ENCODE measurements at regions of chr5 and their contacts with region 1.

Region 1: DNA sequence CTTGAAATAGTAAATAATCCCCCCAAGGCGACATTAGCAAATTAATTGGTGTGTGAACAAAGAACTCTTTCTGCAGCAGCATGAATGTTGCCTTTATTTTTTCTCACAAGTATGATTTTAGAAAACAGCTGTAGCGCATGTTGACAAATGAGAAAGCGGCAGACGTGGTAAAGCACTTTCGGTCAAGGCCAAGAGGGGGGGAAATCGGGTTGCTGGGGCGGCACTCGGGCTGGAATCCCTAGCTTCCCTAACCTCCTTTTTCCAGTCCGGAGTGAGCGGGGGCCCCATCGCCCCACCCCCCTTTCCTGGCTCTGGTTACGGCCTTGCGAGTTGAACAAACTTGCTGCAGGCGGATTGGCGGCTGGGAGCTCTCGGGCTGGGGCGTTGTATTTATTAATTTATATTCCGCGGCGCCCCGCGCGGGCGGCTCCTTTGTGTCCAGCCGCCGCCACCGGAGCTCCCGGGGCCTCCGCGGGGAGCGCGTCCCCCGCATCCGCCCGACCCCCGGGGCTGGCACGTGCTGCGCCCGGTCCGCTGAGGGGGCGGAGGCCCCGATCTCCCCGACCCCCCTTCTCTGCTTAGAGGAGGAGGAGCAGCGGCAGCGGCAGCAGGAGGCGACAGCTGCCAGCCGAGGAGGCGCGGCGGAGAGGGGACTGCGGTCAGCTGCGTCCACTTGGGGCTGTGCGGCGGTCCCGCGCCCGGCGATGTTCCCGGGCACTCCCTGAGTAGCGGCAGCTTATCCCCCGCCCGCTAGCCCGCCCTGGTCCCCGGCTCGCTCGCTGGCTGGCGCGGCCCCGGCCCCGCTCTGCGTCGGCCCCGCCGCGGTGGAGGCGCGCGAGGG is at the start of gene RHOBTB3:
- DNase-seq: peak; percentile 96
- total RNA-seq, gene RHOBTB3: 40.2 to 55.7 TPM

Region 2: DNA sequence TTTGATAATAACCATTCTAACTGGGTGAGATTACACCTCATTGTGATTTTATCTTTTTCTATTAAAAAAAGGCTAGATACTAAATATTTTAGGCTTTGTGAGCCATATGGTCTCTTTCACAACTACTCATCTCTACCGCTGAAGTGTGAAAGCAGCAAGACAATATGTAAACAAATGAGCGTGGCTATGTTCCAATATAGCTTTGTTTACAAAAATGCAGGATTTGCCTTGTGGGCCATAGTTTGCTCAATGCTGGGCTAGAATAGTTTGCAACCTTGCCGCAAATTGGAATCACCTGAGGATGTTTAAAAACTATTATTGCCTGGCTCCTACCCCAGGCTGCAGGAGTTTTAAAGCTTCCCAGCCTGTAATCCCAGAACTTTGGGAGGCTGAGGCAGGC is 121.2 kb before region 1 on chr5:
- intact Hi-C with region 1: no loop called
- DNase-seq: no peak

Region 3: GRCh38 chr5:95664204-95664786 is 66.7 kb before region 1 on chr5:
- intact Hi-C with region 1: loop called (anchors 5 to 10 kb)
- DNase-seq: no peak

Region 4: GRCh38 chr5:95669540-95669939 is 61.4 kb before region 1 on chr5:
- intact Hi-C with region 1: loop called (anchors 5 to 10 kb)
- DNase-seq: peak; percentile 87

Region 5: DNA sequence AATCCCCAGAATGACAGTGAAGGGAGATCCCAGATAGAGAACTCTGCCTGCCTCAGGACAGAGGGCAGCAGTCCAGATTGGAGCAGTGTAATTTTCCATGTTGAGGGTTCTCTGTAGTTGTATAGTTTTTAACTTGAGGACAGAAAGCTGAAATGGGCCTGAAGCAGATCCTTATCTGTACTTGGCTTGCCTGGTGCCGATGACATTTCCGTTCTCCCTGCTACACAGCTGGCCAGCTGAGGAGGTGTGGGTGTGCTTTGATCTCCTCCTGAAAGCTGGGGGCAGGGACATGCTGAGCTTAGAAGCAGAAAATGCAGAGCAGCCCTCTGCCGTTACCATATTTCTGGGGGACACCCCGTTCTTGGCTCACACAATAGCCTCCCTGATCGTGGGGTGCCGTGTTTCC is 81.1 kb after region 1 on chr5:
- intact Hi-C with region 1: loop called in 1 of 2 experiments (anchors 2 kb)
- DNase-seq: peak; percentile 68